ENCODE measurements at regions of chr20 and their contacts with region 1.

Region 1: GRCh38 chr20:37873884-37874283 is 29.0 kb upstream of the VSTM2L start:
- DNase-seq: peak; percentile 66

Region 2: DNA sequence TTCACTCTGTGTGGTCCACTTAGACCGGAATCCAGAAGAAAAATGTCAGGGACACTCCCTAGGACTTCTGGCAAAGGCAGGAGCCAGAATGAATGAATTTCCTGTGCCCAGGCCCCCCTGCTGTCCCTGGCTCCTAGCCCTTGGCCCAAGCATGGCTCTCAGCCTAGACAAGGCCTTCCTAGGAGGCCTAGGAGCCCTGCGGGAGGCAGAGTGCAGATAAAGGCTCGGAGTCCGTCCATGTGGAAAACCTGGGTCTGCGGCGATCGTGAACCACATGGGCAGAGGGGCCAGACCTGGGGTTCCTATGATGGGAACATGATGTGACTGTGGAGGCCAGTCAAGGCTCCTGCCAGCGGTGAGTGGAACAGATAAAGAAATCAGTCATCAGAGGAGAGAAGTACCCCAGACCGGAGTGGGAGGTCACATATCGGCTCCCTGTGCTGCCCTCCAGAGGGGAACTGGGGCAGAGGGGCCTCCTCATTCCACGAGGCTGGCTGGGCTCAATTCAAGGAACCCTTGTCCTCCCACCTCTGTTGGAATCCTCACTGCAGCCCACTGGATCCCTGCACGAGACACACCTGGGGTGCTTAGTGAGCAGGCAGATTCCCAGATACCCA is 23.2 kb after region 1 on chr20:
- intact Hi-C with region 1: no loop called
- DNase-seq: no peak

Region 3: GRCh38 chr20:37931153-37931922 is 57.5 kb after region 1 on chr20:
- intact Hi-C with region 1: loop called in 1 of 2 experiments (anchors 2 kb)
- DNase-seq: no peak

Measured in posterior vena cava (tissue), 2 donors.